Body of pancreas (tissue), 4 donors: ENCODE measurements at regions of chr10 and their contacts with region 1.

Region 1: GRCh38 chr10:63083904-63084689 is 49.0 kb upstream of the NRBF2 start:
- DNase-seq: peak; percentile 46 to 72 (median 67)
- ATAC-seq: peak; percentile 90
- H3K4me3 ChIP-seq: no peak overlapping the region
- H3K27ac ChIP-seq: no peak overlapping the region
- H3K4me1 ChIP-seq: no peaks in the 10 kb centered on the region
- H3K27me3 ChIP-seq: no peaks in the 10 kb centered on the region
- CTCF ChIP-seq: peak; percentile 13 to 85 (median 72)
- POLR2A ChIP-seq: no peak

Region 2: GRCh38 chr10:62594093-62594520 is 490.0 kb before region 1 on chr10:
- intact Hi-C with region 1: loop called (anchors 10 kb)
- DNase-seq: peak; percentile 44 to 63 (median 56)
- ATAC-seq: peak; percentile 81
- H3K4me3 ChIP-seq: no peak overlapping the region
- H3K27ac ChIP-seq: no peak overlapping the region
- H3K4me1 ChIP-seq: no peaks in the 10 kb centered on the region
- H3K27me3 ChIP-seq: no peaks in the 10 kb centered on the region
- CTCF ChIP-seq: peak; percentile 48 to 95 (median 75)
- POLR2A ChIP-seq: no peak

Region 3: GRCh38 chr10:62972103-62972502 is 112.0 kb before region 1 on chr10:
- intact Hi-C with region 1: no loop called
- DNase-seq: no peak
- ATAC-seq: no peak
- H3K4me3 ChIP-seq: no peak overlapping the region
- H3K27ac ChIP-seq: no peak overlapping the region
- H3K4me1 ChIP-seq: no peaks in the 10 kb centered on the region
- H3K27me3 ChIP-seq: no peaks in the 10 kb centered on the region
- CTCF ChIP-seq: no peak
- POLR2A ChIP-seq: no peak